ENCODE measurements at regions of chr1 and their contacts with region 1.

Region 1: GRCh38 chr1:6727535-6727934 is 25.9 kb upstream of the DNAJC11 start:
- DNase-seq: peak; percentile 32 to 72 (median 57)
- H3K4me3 ChIP-seq: no peak overlapping the region
- H3K27ac ChIP-seq: no peak overlapping the region
- H3K4me1 ChIP-seq: peaks cover 0 to 7% of the 10 kb centered on the region in 2 donors
- H3K27me3 ChIP-seq: no peaks in the 10 kb centered on the region
- CTCF ChIP-seq: peak; percentile 70 to 88 (median 81)
- POLR2A ChIP-seq: no peak

Region 2: GRCh38 chr1:6784560-6785317 is 57.2 kb after region 1 on chr1:
- intact Hi-C with region 1: loop called in 1 of 2 experiments (anchors 5 kb)
- DNase-seq: peak; percentile 99 to 100 (median 100)
- H3K4me3 ChIP-seq: peak overlapping the region in 2 of 4 donors; percentile 80 to 86
- H3K27ac ChIP-seq: peak overlapping the region; percentile 80 to 99 (median 98)
- H3K4me1 ChIP-seq: peaks cover 4 to 31% of the 10 kb centered on the region in 2 donors
- H3K27me3 ChIP-seq: no peaks in the 10 kb centered on the region
- CTCF ChIP-seq: peak in 1 of 6 experiments; percentile 30
- POLR2A ChIP-seq: peak; percentile 82 to 97

Region 3: DNA sequence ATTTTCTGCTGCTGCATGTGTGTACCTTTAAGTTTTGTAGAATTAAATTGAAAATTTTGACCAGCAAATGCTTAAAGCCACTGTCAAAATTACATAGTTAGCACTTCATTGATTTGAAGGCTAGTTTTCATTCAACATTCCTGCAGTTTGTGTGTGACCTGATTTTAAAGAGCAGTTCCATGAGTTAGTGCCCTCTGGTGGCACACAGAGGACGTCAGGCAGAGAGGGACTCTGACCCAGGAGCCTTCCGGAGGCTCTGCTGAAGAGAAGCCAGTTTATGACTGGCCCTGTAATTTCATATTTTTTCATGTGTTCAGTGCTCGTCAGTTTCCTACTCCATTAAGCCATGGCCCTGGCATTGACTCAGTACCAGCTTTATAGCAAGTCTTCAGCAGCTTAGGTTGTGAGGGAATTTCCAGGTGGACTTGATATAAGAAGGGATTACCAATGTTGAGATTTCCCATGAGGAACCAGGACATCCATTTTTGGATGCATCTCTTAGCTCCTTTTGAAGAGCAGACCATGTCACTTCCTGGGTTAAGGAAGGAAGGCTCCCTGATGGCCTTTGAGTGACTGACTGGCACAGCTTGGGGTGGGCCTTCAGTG is 162.4 kb after region 1 on chr1:
- intact Hi-C with region 1: loop called (anchors 10 kb)
- DNase-seq: peak; percentile 69 to 88 (median 76)
- H3K4me3 ChIP-seq: no peak overlapping the region
- H3K27ac ChIP-seq: no peak overlapping the region
- H3K4me1 ChIP-seq: peaks cover 1 to 11% of the 10 kb centered on the region in 2 donors
- H3K27me3 ChIP-seq: no peaks in the 10 kb centered on the region
- CTCF ChIP-seq: peak; percentile 69 to 91 (median 81)
- POLR2A ChIP-seq: no peak

Region 4: GRCh38 chr1:7050751-7051668 is 323.5 kb after region 1 on chr1:
- intact Hi-C with region 1: loop called in 1 of 2 experiments (anchors 10 kb)
- DNase-seq: no peak
- H3K4me3 ChIP-seq: no peak overlapping the region
- H3K27ac ChIP-seq: no peak overlapping the region
- H3K4me1 ChIP-seq: no peaks in the 10 kb centered on the region
- H3K27me3 ChIP-seq: no peaks in the 10 kb centered on the region
- CTCF ChIP-seq: no peak
- POLR2A ChIP-seq: no peak

Region 5: DNA sequence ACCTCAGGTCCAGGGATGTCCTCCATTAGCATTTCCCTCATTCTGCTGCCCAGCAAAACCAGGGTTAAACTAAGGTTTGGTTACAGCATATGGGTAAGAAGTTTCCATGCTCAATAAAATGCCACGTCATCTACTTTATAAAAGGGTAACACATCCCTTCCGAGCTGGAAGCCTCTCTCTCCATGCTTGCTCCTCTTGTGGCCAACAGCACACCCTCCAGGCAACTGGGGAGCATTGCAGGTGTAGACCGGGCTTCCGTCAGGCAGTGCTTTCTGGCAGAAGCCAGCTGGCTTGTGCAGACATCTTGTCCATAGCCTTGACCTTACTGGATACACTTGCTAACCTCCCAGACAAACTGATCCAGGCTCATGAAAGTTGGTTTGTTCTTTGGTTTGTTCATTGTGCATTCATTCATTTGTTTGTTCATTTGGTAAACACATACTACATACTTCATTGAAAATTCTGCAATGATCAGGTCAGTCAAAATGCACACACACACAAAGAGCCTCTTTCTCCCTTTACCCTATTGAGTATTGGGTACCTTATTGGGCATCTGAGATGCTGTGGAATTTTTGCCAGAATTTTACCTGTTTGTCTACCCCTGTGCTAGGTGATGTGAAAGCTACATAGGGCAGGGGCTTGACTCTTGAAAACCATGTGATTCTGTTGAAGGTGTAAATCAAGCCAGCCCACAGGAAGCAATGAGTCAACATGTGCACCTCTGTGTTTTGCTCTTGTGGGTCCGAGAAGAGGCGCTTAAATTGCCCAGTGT is 480.5 kb after region 1 on chr1:
- intact Hi-C with region 1: loop called (anchors 5 to 10 kb)
- DNase-seq: peak; percentile 56 to 83 (median 74)
- H3K4me3 ChIP-seq: no peak overlapping the region
- H3K27ac ChIP-seq: no peak overlapping the region
- H3K4me1 ChIP-seq: no peaks in the 10 kb centered on the region
- H3K27me3 ChIP-seq: no peaks in the 10 kb centered on the region
- CTCF ChIP-seq: peak; percentile 49 to 81 (median 78)
- POLR2A ChIP-seq: no peak

Region 6: GRCh38 chr1:7218210-7218832 is 490.8 kb after region 1 on chr1:
- intact Hi-C with region 1: loop called (anchors 5 to 10 kb)
- DNase-seq: peak in 6 of 7 donors; percentile 18 to 71 (median 38)
- H3K4me3 ChIP-seq: no peak overlapping the region
- H3K27ac ChIP-seq: no peak overlapping the region
- H3K4me1 ChIP-seq: no peaks in the 10 kb centered on the region
- H3K27me3 ChIP-seq: no peaks in the 10 kb centered on the region
- CTCF ChIP-seq: peak; percentile 39 to 84 (median 72)
- POLR2A ChIP-seq: no peak

Region 7: DNA sequence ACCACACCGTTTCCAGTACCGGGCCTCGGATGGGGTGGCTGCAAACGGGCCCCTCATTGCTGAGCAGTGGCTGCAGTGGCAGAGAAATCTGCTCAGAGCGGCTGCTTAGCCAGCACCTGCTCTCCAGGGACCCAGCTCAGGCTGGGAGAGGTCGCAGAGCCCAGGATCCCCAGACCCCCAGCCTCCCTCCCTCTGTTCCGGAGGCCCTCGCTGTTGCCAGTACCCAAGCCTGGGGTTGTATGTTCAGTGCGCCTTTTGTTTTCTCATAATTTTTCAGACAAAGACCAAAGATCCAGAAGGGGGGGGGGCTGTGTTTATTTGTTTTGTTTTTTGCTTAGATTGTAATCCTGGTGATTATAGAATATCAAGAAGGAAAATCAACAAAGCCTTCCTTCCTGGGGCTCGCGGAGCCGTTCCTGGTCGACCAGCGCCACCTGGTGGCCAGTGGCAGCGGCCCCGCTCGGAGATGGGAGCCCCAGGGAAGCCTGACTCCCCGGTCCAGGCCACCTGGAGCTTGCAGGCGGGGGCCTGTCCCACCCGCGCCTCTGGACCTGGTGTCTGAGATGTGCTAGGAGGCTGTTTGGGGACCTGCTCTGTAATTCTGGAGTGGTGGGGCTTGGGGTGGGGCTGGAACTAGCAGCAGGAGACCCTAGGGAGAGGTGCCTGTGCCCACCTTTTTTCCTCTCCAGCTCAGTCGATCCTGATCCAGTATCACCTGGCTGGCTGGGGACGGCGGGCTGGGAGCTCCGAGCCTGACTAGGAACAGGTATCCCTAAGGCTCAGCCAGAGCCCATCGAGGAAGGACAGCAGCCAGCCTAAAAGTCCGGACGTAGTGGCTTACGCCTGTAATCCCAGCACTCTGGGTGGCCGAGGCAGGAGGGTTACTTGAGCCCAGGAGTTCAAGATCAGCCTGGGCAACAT is 919.7 kb after region 1 on chr1:
- intact Hi-C with region 1: loop called in 1 of 2 experiments (anchors 10 kb)
- DNase-seq: peak; percentile 59 to 85 (median 74)
- H3K4me3 ChIP-seq: no peak overlapping the region
- H3K27ac ChIP-seq: no peak overlapping the region
- H3K4me1 ChIP-seq: no peaks in the 10 kb centered on the region
- H3K27me3 ChIP-seq: no peaks in the 10 kb centered on the region
- CTCF ChIP-seq: peak; percentile 70 to 98 (median 88)
- POLR2A ChIP-seq: no peak